Activated T-helper 1 cell treated with anti-CD3 and anti-CD28 coated beads, Interleukin-12 subunit alpha, Interleukin-12 subunit beta, Interleukin-2, Interleukin-4 antibody, amounts not matched to agents 30 ng/mL and 10 ng/mL and 1 ng/mL, durations not matched to agents 14 hours and 24 hours and 36 hours (primary cell): ENCODE measurements at regions of chr2 and their contacts with region 1.

Region 1: DNA sequence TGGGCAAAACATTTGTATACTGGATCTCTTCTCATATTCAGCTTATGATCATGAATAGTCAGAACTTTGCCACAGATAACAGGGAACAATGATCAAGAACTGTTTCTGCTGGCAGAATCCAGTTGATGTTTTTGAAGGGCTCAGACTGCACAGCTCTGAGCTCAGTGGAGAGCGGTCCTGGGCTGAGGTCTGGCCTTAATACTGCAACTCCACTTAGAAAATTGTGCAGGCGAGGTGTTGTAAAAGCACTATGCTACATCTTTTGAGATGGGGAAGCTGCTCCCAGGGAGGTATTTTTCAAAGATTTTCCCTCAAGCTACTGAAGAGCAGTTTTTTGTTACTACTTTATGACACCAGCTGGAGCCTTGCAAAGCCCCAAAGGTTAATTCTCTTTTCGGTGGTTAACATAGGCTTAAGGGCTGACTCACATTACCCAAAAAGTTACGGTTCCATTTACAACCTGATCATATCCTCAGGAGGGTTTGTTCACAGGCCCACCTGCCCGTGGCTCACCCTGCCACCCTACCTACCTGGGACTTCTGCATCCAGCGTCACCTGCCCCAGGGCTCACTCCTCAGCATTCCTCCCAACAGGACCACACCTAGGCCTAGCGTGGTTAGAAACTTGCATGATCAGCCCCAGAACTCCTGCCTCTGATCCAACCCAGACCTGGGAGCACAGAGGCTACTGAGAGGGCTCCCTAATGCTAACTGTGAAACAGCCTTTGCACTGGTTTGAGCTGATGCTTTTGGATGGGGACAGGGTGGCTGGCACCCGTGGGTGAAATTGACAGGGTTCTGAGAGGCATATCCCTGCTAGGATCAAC is 114.4 kb downstream of the NCK2 start:
- DNase-seq: no peak
- H3K4me3 Mint-ChIP-seq: peak overlapping the region; percentile 53
- H3K27ac Mint-ChIP-seq: peak overlapping the region; percentile 89
- H3K4me1 Mint-ChIP-seq: peaks cover 90% of the 10 kb centered on the region
- H3K27me3 Mint-ChIP-seq: peaks cover 2% of the 10 kb centered on the region

Region 2: GRCh38 chr2:105645031-105645937 is 213.8 kb before region 1 on chr2:
- intact Hi-C with region 1: loop called (anchors 1 kb)
- DNase-seq: no peak
- H3K4me3 Mint-ChIP-seq: no peak overlapping the region
- H3K27ac Mint-ChIP-seq: no peak overlapping the region
- H3K4me1 Mint-ChIP-seq: no peaks in the 10 kb centered on the region
- H3K27me3 Mint-ChIP-seq: peaks cover 10% of the 10 kb centered on the region

Region 3: DNA sequence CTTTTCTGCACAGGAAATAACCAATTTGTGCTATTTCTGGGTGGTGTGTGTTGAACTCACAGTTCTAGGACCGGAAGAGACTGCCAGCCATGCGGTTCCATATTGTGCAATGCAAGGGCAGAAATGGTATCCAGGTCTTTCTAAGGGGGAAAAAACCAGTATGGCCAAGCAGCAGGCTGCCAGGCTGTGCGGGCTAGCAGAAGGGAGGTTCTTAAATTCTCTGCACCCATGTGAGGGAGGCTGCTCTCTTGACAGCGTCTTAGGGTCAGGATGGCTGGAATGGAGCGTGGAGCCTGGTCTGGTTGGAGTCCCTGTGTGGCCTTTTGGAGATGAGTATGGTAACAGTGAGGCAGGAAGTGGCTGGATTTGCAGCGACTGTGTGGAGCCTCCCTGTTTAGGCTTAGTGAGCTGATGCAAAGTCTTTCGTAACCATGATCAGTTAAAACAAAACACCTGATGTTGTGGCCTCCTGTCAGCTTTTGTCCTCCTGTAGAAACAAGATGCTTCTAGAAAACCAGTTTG is 61.7 kb before region 1 on chr2:
- intact Hi-C with region 1: loop called (anchors 1 kb)
- DNase-seq: no peak
- H3K4me3 Mint-ChIP-seq: peak overlapping the region; percentile 77
- H3K27ac Mint-ChIP-seq: peak overlapping the region; percentile 97
- H3K4me1 Mint-ChIP-seq: peaks cover 89% of the 10 kb centered on the region
- H3K27me3 Mint-ChIP-seq: no peaks in the 10 kb centered on the region

Region 4: DNA sequence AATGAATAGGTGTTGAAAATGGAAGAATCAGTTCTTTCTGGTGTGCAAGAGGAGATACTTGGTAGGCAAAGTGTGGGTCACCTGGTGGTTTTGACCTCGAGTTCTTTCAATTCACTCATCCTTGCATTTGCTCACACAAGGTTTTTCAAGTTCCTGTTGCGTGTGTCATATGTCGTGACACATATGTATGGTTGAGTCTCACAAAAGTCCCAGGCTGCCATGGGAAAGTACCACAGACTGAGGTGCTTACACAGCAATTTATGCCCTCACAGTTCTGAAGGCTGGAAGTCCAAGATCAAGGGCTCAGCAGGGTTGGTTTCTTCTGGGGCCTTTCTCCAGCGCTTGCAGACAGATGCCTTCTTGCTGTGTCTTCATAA is 50.0 kb before region 1 on chr2:
- intact Hi-C with region 1: loop called (anchors 1 kb)
- DNase-seq: no peak
- H3K4me3 Mint-ChIP-seq: no peak overlapping the region
- H3K27ac Mint-ChIP-seq: peak overlapping the region; percentile 81
- H3K4me1 Mint-ChIP-seq: peaks cover 82% of the 10 kb centered on the region
- H3K27me3 Mint-ChIP-seq: no peaks in the 10 kb centered on the region

Region 5: DNA sequence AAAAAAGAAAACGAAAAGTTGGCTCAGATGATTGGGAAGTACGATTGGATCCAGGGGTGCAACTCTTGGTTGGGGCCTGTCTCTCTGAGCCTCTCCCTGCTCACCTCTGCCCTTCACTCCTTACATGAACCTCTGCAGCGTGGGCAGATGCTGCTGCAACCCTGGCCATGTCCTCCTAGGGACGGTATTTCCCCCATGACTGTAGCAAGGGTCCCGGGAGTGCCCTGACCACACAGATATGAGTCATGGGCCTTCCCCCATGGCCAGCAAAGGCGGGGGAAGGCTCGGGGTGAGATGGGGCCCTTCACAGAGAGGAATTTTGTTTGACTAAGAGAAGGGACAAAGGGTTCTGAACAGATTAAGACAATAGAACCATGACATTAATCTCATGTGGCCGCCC is 14.6 kb after region 1 on chr2:
- intact Hi-C with region 1: loop called (anchors 1 kb)
- DNase-seq: peak; percentile 44
- H3K4me3 Mint-ChIP-seq: peak overlapping the region; percentile 61
- H3K27ac Mint-ChIP-seq: peak overlapping the region; percentile 89
- H3K4me1 Mint-ChIP-seq: peaks cover 87% of the 10 kb centered on the region
- H3K27me3 Mint-ChIP-seq: no peaks in the 10 kb centered on the region

Region 6: GRCh38 chr2:106085181-106085940 is 226.3 kb after region 1 on chr2:
- intact Hi-C with region 1: loop called (anchors 1 kb)
- DNase-seq: peak; percentile 41
- H3K4me3 Mint-ChIP-seq: peak overlapping the region; percentile 38
- H3K27ac Mint-ChIP-seq: peak overlapping the region; percentile 76
- H3K4me1 Mint-ChIP-seq: peaks cover 18% of the 10 kb centered on the region
- H3K27me3 Mint-ChIP-seq: no peaks in the 10 kb centered on the region